ENCODE measurements at regions of chr1 and their contacts with region 1.

Region 1: GRCh38 chr1:218345673-218346390 is 696 bp downstream of the TGFB2 start:
- DNase-seq: no peak
- H3K4me3 Mint-ChIP-seq: peak overlapping the region; percentile 78
- H3K27ac Mint-ChIP-seq: no peak overlapping the region
- H3K4me1 Mint-ChIP-seq: peaks cover 21% of the 10 kb centered on the region
- H3K27me3 Mint-ChIP-seq: peaks cover 59% of the 10 kb centered on the region

Region 2: GRCh38 chr1:218164111-218164929 is 181.5 kb before region 1 on chr1:
- intact Hi-C with region 1: loop called (anchors 5 kb)
- DNase-seq: no peak
- H3K4me3 Mint-ChIP-seq: peak overlapping the region; percentile 79
- H3K27ac Mint-ChIP-seq: peak overlapping the region; percentile 43
- H3K4me1 Mint-ChIP-seq: peaks cover 15% of the 10 kb centered on the region
- H3K27me3 Mint-ChIP-seq: peaks cover 52% of the 10 kb centered on the region

Region 3: GRCh38 chr1:219660666-219661463 is 1315.0 kb after region 1 on chr1:
- intact Hi-C with region 1: loop called (anchors 10 kb)
- DNase-seq: peak; percentile 20
- H3K4me3 Mint-ChIP-seq: peak overlapping the region; percentile 42
- H3K27ac Mint-ChIP-seq: no peak overlapping the region
- H3K4me1 Mint-ChIP-seq: peaks cover 6% of the 10 kb centered on the region
- H3K27me3 Mint-ChIP-seq: peaks cover 4% of the 10 kb centered on the region

Measured in activated T-helper 1 cell treated with anti-CD3 and anti-CD28 coated beads, Interleukin-12 subunit alpha, Interleukin-12 subunit beta, Interleukin-2, Interleukin-4 antibody, amounts not matched to agents 30 ng/mL and 10 ng/mL and 1 ng/mL, durations not matched to agents 14 hours and 24 hours and 36 hours (primary cell).